ENCODE measurements at regions of chr4 and their contacts with region 1.

Region 1: DNA sequence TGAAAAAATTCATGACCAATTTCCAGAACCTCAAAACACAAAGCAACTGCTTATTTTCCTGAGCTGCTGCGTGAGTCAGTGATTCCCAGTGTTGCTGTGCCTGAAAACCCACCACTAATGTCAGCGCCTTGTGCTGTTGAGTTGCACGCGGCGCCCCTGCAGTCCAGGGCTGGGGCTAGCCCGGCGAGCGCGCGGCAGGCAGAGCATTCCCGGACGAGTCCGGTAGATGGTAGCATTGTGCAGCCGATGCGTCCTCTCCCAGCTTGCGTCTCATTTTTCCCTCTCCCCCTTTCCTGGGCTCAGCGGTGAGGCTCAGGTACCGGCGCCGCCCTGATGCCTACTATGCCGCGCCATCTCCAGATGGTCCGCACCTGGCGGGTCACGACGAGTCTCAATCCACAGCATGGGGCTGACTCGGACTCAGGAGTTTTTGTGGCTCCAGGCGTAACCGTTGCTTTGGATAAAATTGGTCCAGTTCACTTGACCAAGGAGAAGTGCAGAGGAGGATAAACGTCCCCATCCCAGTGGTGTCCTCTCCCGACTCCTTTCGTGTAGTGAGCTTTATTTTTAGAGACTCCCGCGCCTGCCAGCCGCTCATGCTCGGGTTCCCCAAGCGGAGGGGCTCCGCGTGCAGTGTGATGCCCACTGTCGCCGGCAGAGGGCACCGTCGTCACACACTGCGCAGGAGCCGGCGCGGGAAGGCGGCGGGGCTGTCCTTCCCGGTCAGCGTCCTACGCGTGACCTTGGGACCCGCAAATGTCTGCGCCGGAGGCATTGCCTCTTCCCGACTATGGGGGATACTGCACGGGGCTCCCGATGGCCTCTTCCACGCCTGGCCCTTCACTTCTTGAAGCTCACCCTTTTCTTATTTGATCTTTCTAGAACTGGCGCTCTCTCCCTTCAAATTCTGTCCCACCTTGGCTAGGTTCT is 53.6 kb upstream of the IGFBP7 start:
- DNase-seq: peak; percentile 90
- ATAC-seq: peak; percentile 98
- H3K4me3 ChIP-seq: peak overlapping the region; percentile 83
- H3K27ac ChIP-seq: no peak overlapping the region
- H3K4me1 ChIP-seq: peaks cover 6% of the 10 kb centered on the region; the same call in 1 of the 2 replicates
- H3K27me3 ChIP-seq: peaks cover 13% of the 10 kb centered on the region
- CTCF ChIP-seq: peak; percentile 85

Region 2: DNA sequence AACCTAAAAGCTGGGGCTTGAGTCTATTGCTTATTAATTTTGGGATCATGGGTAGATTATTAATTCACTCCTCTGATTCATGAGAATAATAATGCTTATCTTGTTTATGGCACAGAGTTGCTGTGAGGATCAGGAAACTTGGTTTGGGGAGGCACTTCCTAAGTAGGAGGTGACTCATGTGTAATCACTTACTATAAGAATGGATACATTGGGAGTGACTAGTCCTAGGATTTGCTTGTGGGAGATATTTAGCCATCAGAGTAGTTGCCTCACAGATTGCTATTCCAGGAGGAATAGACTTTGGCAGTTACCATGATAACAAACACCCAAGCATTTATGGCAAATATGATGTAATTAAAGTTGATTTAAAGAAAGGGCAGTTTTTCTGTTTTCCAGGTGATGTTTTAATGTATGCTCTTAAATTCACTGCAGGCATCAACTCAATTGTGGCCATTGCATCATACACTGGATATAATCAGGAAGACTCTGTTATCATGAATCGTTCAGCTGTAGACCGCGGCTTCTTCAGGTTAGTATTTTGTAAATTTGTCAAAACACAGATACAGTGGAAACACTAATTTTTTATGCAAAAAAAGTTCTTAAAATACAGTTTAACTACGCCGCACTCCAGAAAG is 143.2 kb before region 1 on chr4:
- CTCF ChIA-PET with region 1: no interaction called
- POLR2A ChIA-PET with region 1: no interaction called
- intact Hi-C with region 1: loop called (anchors 5 kb)
- DNase-seq: peak; percentile 95
- ATAC-seq: peak; percentile 81
- H3K4me3 ChIP-seq: no peak overlapping the region
- H3K27ac ChIP-seq: peak overlapping the region; percentile 86
- H3K4me1 ChIP-seq: peaks cover 61% of the 10 kb centered on the region
- H3K27me3 ChIP-seq: no peaks in the 10 kb centered on the region
- CTCF ChIP-seq: no peak

Region 3: DNA sequence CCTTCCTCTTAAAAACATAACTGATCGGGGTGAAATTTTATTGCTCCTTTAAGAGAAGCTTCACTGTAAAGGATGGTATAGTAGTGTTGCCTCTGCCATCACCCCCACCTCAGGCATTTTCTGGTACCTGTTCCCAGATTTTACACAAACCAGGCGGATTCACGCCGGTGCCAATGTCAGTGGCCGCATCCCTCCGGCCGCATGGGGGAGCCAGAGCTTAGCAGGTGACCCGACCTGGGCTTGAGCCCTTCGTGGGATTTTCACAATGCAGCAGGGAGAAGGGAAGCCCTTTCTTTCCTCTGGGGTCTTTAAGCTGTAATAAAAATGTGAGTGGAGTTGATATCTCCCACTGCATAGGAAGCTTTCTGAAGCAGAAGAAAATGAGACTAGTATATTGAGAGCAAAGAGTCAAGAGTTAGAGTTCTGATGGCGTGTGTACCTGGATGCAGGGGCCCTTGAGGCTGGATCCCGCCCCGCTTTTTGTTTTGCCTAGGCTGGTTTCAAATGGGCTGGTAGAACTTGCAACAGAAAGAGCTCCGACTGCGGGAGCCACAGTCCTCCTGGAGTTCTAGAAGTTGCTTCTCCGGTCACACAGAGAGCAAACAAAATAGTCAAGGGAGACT is 125.7 kb before region 1 on chr4:
- CTCF ChIA-PET with region 1: interaction called, 6 read pairs
- POLR2A ChIA-PET with region 1: no interaction called
- intact Hi-C with region 1: loop called (anchors 2 kb)
- DNase-seq: peak; percentile 80
- ATAC-seq: peak; percentile 90
- H3K4me3 ChIP-seq: peak overlapping the region; percentile 16; the same call in 1 of the 2 replicates
- H3K27ac ChIP-seq: no peak overlapping the region
- H3K4me1 ChIP-seq: no peaks in the 10 kb centered on the region
- H3K27me3 ChIP-seq: no peaks in the 10 kb centered on the region
- CTCF ChIP-seq: peak; percentile 98

Region 4: GRCh38 chr4:57426779-57427395 is 263.1 kb after region 1 on chr4:
- CTCF ChIA-PET with region 1: no interaction called
- POLR2A ChIA-PET with region 1: no interaction called
- intact Hi-C with region 1: loop called (anchors 5 kb)
- DNase-seq: peak; percentile 90
- ATAC-seq: peak; percentile 90
- H3K4me3 ChIP-seq: no peak overlapping the region
- H3K27ac ChIP-seq: no peak overlapping the region
- H3K4me1 ChIP-seq: peaks cover 38% of the 10 kb centered on the region
- H3K27me3 ChIP-seq: peaks cover 12% of the 10 kb centered on the region; the same call in 1 of the 2 replicates
- CTCF ChIP-seq: peak; percentile 92

Region 5: DNA sequence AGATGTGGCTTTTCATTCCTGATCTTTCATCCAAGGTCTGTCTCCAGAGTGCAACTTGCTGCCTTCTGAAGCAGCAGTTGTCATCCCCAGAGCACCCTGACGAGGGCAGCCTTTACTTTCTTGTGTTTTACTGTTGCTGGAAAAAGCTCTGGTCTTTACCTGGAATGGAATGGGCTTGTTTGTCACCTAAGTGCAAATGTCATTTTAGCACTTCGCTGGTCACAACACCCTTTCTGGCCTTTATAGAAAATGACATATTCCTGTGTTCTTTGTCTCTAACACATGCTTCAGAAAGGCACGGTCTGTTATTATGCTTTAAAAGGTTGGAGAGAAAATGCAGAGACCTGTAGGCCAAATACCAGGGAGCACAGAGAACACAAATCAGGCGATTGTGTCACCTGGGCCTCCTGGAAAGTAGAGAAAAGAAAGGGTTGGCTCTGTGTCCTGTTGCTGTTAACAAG is 279.1 kb after region 1 on chr4:
- CTCF ChIA-PET with region 1: no interaction called
- POLR2A ChIA-PET with region 1: no interaction called
- intact Hi-C with region 1: loop called (anchors 5 kb)
- DNase-seq: peak; percentile 78
- ATAC-seq: peak; percentile 70
- H3K4me3 ChIP-seq: no peak overlapping the region
- H3K27ac ChIP-seq: no peak overlapping the region
- H3K4me1 ChIP-seq: no peaks in the 10 kb centered on the region
- H3K27me3 ChIP-seq: peaks cover 87% of the 10 kb centered on the region
- CTCF ChIP-seq: peak; percentile 92

Measured in PC-3 (cell line).